Mammary epithelial cell (primary cell): ENCODE measurements at regions of chr7 and their contacts with region 1.

Region 1: GRCh38 chr7:23181684-23182553 is at the start of gene NUP42:
- DNase-seq: peak; percentile 98
- H3K4me3 ChIP-seq: peak within 1 kb of the TSS; percentile 56 to 85 (median 85)
- H3K27ac ChIP-seq: peak within 1 kb of the TSS; percentile 95
- H3K4me1 ChIP-seq: peaks cover 12% of the 10 kb centered on the region
- H3K27me3 ChIP-seq: no peaks in the 10 kb centered on the region
- CTCF ChIP-seq: no peak
- total RNA-seq, gene NUP42: 29.0 to 36.0 TPM

Region 2: GRCh38 chr7:23247603-23248335 is 65.8 kb after region 1 on chr7:
- CTCF ChIA-PET with region 1: interaction called, 4 read pairs
- dilution Hi-C with region 1: no loop called
- in situ Hi-C with region 1: no loop called
- intact Hi-C with region 1: loop called (anchors 5 kb)
- DNase-seq: no peak
- H3K4me3 ChIP-seq: peak overlapping the region; percentile 3 to 67 (median 45)
- H3K27ac ChIP-seq: no peak overlapping the region
- H3K4me1 ChIP-seq: peaks cover 23% of the 10 kb centered on the region
- H3K27me3 ChIP-seq: no peaks in the 10 kb centered on the region
- CTCF ChIP-seq: no peak

Region 3: GRCh38 chr7:23273141-23273599 is 91.3 kb after region 1 on chr7:
- CTCF ChIA-PET with region 1: interaction called, 12 read pairs
- dilution Hi-C with region 1: no loop called
- in situ Hi-C with region 1: no loop called
- intact Hi-C with region 1: loop called (anchors 1 kb)
- DNase-seq: peak; percentile 88
- H3K4me3 ChIP-seq: no peak overlapping the region
- H3K27ac ChIP-seq: no peak overlapping the region
- H3K4me1 ChIP-seq: peaks cover 5% of the 10 kb centered on the region
- H3K27me3 ChIP-seq: no peaks in the 10 kb centered on the region
- CTCF ChIP-seq: peak; percentile 82 to 94

Region 4: DNA sequence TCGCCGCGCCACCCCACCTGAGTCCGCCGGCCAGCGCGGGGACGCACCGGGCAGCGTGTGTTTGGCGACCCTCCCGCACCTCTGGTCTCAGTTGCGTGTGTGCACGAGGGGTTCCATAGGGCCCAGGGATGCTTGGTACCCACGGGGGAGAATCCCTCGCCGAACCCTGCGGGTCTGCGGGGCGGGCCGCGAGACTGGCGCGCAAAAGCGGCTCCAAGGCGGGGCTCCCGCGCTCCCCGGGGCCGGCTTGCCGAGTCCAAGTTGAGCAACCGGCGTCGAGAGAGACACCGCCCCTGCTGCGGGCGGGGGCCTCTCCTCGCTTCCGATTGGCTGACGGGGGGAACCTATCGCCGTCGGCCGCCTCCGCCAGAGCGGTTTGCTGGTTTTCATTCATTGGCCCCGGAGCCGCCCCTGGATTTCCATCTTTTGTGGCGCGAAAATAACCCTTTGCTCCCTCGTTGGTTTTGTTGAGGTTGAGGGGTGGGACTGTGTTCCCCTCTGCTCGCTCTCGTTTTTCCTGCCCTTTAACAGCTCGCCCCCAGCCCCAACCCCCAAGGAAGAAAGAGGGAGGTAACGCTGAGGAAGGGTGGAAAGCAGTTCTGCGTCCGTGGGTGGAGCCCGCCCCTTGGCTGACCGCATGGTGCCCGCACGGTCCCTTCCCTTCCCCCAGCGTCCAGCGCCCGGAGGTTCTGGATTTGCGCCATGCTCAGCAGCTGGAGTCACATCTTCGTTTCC is 292.3 kb after region 1 on chr7:
- CTCF ChIA-PET with region 1: no interaction called
- dilution Hi-C with region 1: no loop called
- in situ Hi-C with region 1: no loop called
- intact Hi-C with region 1: loop called (anchors 10 kb)
- DNase-seq: peak; percentile 91
- H3K4me3 ChIP-seq: peak overlapping the region; percentile 47 to 67 (median 62)
- H3K27ac ChIP-seq: no peak overlapping the region
- H3K4me1 ChIP-seq: peaks cover 19% of the 10 kb centered on the region
- H3K27me3 ChIP-seq: peaks cover 40% of the 10 kb centered on the region
- CTCF ChIP-seq: no peak